Transverse colon (tissue), 4 donors: ENCODE measurements at regions of chr18 and their contacts with region 1.

Region 1: DNA sequence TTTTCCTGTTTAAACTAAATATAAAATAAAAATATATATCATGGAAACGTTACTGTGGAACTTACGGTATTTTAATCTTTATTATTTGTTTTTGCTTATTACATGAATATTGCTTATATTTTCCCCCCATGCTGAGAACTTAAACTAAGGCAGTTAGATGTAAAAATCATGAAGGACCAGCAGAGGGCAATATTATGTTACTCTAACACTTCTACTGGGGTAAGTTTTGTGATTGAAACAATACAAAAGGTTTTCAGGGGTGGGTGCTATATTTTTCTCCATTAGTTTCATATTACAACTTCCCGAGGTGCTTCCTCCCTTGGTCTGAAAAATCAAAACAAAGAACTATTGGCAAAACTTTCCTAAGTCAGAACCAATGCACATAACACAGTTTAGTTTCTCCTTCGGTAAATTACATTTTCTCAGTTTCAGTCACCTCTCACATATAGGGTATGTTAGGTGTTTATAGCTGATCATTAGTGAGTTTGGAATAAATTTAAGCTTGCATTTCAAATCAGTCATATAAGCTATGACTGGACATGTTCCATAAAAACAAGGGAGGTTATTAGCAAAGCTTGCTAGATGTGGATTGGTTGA is 54.8 kb downstream of the ZNF407 start:
- DNase-seq: no peak
- H3K4me3 ChIP-seq: no peak overlapping the region
- H3K27ac ChIP-seq: no peak overlapping the region
- H3K4me1 ChIP-seq: no peaks in the 10 kb centered on the region
- H3K27me3 ChIP-seq: no peaks in the 10 kb centered on the region
- CTCF ChIP-seq: peak; percentile 51 to 68 (median 52)
- EP300 ChIP-seq: no peak
- POLR2A ChIP-seq: no peak

Region 2: DNA sequence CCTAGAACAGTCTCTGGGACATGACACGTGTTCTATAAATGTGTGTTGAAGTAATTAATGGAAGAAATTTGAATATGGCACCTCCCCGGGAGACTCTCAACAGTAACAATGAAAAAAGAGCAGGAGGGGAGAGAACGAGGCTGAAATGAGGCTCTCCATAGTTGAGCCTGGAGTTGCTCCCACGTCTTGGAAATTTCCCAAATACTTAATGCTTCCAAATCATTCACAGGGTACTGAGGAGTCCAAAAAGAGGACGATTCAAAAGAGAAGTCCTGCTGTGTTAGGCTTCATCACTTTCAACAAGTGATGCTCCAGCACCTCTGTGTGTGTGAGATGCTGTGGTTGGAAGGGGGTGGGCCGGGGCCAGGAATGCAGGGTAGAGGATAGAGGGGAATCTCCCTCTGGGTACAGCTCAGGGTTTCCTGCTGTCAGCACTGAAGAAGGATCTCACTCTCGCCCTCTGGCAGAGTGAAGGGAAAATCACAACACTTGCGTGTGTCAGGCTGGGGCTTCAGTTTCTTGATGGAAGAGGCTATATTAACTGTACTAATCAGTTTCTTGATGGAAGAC is 72.9 kb before region 1 on chr18:
- in situ Hi-C with region 1: no loop called
- intact Hi-C with region 1: no loop called
- DNase-seq: no peak
- H3K4me3 ChIP-seq: no peak overlapping the region
- H3K27ac ChIP-seq: no peak overlapping the region
- H3K4me1 ChIP-seq: peaks cover 0 to 2% (median 0%) of the 10 kb centered on the region in 4 donors
- H3K27me3 ChIP-seq: peaks cover 4% of the 10 kb centered on the region
- CTCF ChIP-seq: no peak
- EP300 ChIP-seq: no peak
- POLR2A ChIP-seq: no peak

Region 3: GRCh38 chr18:74597662-74598349 is 54.7 kb before region 1 on chr18 and contains the start of gene ZNF407:
- in situ Hi-C with region 1: no loop called
- intact Hi-C with region 1: no loop called
- DNase-seq: peak; percentile 90
- H3K4me3 ChIP-seq: peak within 1 kb of the TSS; percentile 88 to 96 (median 90)
- H3K27ac ChIP-seq: peak within 1 kb of the TSS; percentile 98 to 99 (median 98)
- H3K4me1 ChIP-seq: peaks cover 15 to 26% (median 24%) of the 10 kb centered on the region in 4 donors
- H3K27me3 ChIP-seq: no peaks in the 10 kb centered on the region
- CTCF ChIP-seq: no peak
- EP300 ChIP-seq: no peak
- POLR2A ChIP-seq: peak; percentile 69
- total RNA-seq, gene ZNF407: 13.5 to 24.1 (median 20.1) TPM

Region 4: DNA sequence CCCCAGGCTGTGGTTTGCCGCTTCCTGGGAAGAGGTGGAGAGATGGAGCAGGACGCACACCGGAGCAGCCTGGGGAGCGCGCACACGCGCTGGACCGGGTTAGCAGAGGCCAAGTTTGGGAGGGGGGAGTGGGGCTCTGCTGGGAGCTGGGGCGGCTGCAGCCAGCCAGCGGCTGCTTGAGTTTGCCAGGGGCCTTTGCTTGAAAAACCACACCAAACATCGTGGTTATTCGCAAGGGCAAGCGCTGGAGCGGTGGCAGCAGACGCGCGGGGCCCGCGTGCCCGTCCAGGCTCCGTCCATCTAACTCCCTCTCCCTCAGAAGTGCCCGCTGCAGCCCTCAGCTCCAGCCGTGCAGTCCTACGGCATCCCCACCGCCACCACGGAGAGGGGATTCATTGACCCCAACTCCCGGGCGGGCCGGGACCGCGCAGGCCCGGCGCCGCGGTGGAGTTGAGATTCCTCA is 551.8 kb after region 1 on chr18:
- in situ Hi-C with region 1: no loop called
- intact Hi-C with region 1: loop called (anchors 5 kb)
- DNase-seq: no peak
- H3K4me3 ChIP-seq: peak overlapping the region; percentile 26 to 58 (median 34)
- H3K27ac ChIP-seq: peak overlapping the region; percentile 97 to 100 (median 98)
- H3K4me1 ChIP-seq: peaks cover 4 to 58% (median 40%) of the 10 kb centered on the region in 4 donors
- H3K27me3 ChIP-seq: no peaks in the 10 kb centered on the region
- CTCF ChIP-seq: no peak
- EP300 ChIP-seq: no peak
- POLR2A ChIP-seq: no peak

Region 5: DNA sequence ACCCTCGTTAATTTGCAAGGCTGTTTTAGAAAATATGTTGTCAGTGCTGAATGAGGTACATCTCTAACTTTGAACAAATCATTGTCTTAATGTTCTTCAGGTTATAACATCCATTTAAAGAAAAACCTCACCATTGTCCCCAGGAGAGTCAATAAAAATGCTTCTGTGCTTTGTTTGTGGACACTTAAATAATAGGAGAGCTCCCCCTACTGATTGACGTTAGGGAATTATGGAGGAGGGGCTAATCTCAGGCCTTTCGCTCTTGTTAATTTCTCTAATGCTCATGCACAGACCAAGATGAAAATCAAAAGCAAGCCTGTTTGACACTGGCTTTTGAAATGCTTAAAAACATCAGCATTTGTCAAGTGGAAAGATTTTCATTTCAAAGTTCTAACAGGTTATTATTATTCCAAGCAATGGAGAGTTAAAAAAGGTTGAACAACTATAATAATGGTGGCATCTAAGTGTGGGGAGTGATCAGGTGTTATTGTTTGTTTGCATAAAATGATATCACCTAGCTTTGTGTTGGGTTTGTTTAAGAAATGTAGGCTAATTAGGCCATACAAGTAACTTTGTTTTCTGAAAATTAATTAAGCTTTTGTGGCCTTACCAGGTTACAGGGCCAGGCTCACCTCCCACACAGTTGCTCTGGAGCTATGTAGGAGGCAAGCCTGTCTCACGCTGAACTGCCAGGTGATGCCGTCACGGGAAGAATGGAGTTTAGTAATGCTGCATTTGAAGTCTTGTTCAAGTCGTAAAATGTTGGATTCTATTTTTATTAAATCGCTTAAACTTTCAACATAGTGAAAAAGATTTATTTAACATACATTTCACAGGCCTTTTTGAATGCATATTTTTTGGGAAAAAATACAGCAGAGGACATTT is 826.7 kb after region 1 on chr18:
- in situ Hi-C with region 1: loop called (anchors 25 kb)
- intact Hi-C with region 1: no loop called
- DNase-seq: no peak
- H3K4me3 ChIP-seq: no peak overlapping the region
- H3K27ac ChIP-seq: no peak overlapping the region
- H3K4me1 ChIP-seq: peaks cover 0 to 6% (median 0%) of the 10 kb centered on the region in 4 donors
- H3K27me3 ChIP-seq: no peaks in the 10 kb centered on the region
- CTCF ChIP-seq: peak; percentile 50 to 59 (median 52)
- EP300 ChIP-seq: no peak
- POLR2A ChIP-seq: no peak

Region 6: DNA sequence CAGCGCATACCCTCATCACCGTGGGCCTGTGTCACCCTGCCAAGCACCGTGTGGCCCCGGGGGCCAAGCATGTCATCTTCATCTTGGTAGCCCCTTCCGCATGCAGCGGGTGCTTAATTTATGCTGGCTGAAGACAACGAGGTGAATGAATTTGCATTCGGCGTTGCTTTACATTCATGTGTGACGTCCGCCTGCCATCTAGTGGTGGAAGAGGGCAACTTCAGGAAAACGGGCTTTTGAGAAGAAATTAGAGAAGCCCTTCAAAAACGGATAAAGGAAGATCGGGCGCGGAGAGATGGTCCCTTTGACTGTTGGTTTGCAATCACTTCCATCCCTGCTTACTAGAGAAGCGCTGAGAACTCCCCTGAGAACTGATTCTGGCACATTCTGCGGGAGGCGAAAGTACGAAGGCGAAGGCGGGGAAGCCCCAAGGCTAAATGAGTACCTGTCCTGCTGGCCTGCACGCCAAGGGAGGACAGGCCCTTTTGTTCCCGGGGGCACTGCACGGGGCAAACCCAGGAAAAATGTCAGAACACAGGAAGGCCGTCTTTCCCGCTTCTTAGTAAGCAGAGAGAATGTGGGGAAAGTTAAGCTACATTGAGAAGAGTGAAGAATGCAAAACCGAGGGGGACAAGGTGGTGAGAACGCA is 1696.7 kb after region 1 on chr18:
- in situ Hi-C with region 1: loop called in 1 of 4 experiments (anchors 25 kb)
- intact Hi-C with region 1: no loop called
- DNase-seq: peak; percentile 66
- H3K4me3 ChIP-seq: peak overlapping the region in 1 of 4 donors; percentile 7
- H3K27ac ChIP-seq: no peak overlapping the region
- H3K4me1 ChIP-seq: peaks cover 0 to 12% (median 8%) of the 10 kb centered on the region in 4 donors
- H3K27me3 ChIP-seq: no peaks in the 10 kb centered on the region
- CTCF ChIP-seq: peak; percentile 78 to 90 (median 88)
- EP300 ChIP-seq: no peak
- POLR2A ChIP-seq: no peak